MCF 10A (cell line): ENCODE measurements at regions of chr10 and their contacts with region 1.

Region 1: DNA sequence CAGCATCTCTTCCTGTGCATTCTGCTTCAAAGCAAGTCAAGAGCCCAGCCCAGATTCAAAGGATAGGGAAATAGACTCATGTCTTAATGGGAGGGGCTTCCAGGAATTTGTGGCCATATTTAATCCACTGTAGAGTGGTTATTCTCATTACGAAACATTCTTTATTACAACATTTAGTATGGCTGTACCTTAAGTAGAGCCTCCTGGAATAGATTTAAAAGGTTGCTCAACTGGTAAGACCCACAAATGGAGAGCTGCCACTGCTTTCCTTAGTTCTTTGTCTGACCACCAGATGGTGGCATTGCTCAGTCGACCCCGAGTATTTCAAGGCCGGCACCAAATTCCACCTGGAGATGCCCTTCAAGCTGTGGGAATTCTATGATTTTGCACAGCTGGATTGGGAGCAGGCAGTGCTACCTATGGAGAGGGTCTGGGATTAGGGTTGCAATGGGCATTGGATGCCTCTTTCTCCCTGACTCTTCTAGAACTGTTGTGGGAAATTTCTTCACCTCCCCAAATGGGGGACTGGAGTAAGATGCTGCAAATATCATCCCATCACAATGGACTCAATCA is 102.2 kb downstream of the RBM20 start:
- DNase-seq: peak; percentile 87
- H3K4me3 Mint-ChIP-seq: no peak overlapping the region
- H3K27ac Mint-ChIP-seq: peak overlapping the region; percentile 51
- H3K4me1 Mint-ChIP-seq: peaks cover 14% of the 10 kb centered on the region
- H3K27me3 Mint-ChIP-seq: no peaks in the 10 kb centered on the region
- CTCF ChIP-seq: peak; percentile 86

Region 2: DNA sequence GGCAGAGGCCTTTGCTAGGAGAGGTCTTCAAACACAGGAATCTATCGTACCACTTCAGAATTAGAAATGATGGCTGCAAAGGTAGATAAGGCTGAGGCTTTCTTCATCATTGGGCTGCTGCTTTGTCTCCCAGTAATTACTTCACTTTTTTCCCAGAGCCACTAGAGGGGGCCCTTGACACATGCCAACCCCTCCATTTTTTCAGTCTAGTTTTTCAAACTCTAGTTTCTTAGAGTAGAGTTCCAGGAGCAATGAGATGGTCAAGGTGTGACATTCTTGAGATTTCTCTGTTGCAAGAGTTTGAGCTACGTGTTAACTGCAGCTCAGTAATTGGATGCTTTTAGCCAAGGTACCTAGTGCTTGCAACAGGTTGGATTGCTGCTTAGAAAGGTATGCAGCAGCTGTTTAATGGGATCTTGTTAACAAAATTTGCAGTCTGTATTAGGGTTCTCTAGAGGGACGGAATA is 136.0 kb before region 1 on chr10:
- CTCF ChIA-PET with region 1: interaction called, 8 read pairs
- POLR2A ChIA-PET with region 1: interaction called, 5 read pairs
- intact Hi-C with region 1: loop called (anchors 1 kb)
- DNase-seq: peak; percentile 78
- H3K4me3 Mint-ChIP-seq: no peak overlapping the region
- H3K27ac Mint-ChIP-seq: no peak overlapping the region
- H3K4me1 Mint-ChIP-seq: no peaks in the 10 kb centered on the region
- H3K27me3 Mint-ChIP-seq: no peaks in the 10 kb centered on the region
- CTCF ChIP-seq: peak; percentile 62

Region 3: DNA sequence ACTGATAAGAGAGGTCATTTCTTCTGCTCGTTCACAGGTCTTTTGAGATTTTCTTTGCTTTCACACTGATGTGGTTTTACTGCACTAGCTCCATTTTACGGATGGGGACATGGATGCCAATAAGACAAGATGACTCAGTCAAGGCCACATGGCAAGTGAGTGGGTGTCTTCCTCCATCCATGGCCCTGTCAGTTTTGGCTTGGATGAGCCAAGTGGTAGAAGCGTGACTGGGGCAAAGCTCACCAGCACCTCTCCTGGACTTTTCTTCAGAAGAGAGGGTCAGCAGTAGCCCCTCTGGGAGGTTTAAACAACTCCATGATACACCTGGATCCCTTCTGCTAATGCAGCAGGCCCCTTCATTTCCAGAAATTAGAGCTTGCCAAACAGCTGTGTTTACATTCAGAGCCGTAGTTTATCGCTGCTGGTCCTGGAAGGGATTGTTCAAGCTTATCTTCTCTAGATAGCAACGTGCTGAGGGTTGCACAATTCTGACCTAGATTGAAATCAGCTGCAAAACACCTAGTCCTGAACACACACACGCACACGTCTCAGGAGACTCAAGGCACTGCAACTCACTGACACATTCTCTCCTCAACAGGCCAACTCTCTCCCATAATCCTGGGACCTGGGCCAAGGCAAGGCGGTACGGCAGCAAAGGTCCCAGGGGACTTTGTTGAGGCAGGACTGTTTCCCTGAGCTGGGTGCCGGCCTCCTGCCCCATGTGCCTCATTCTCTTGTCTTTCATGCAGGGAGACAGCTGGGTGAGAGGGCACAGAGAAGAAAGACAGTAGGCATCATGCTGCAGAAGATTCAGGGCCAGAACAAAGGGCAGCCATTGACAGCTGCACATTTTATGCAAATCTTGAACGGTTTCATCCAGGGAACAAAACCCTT is 111.2 kb after region 1 on chr10:
- CTCF ChIA-PET with region 1: interaction called, 4 read pairs
- POLR2A ChIA-PET with region 1: interaction called, 18 read pairs
- intact Hi-C with region 1: no loop called
- DNase-seq: peak; percentile 52
- H3K4me3 Mint-ChIP-seq: no peak overlapping the region
- H3K27ac Mint-ChIP-seq: peak overlapping the region; percentile 39
- H3K4me1 Mint-ChIP-seq: peaks cover 48% of the 10 kb centered on the region
- H3K27me3 Mint-ChIP-seq: no peaks in the 10 kb centered on the region
- CTCF ChIP-seq: no peak

Region 4: GRCh38 chr10:110901954-110902819 is 155.8 kb after region 1 on chr10:
- CTCF ChIA-PET with region 1: interaction called, 7 read pairs
- POLR2A ChIA-PET with region 1: interaction called, 19 read pairs
- intact Hi-C with region 1: no loop called
- DNase-seq: peak; percentile 93
- H3K4me3 Mint-ChIP-seq: peak overlapping the region; percentile 2
- H3K27ac Mint-ChIP-seq: peak overlapping the region; percentile 4
- H3K4me1 Mint-ChIP-seq: peaks cover 20% of the 10 kb centered on the region
- H3K27me3 Mint-ChIP-seq: no peaks in the 10 kb centered on the region
- CTCF ChIP-seq: no peak

Region 5: GRCh38 chr10:111323389-111323966 is 577.1 kb after region 1 on chr10:
- CTCF ChIA-PET with region 1: no interaction called
- POLR2A ChIA-PET with region 1: no interaction called
- intact Hi-C with region 1: loop called (anchors 1 kb)
- DNase-seq: peak; percentile 13
- H3K4me3 Mint-ChIP-seq: no peak overlapping the region
- H3K27ac Mint-ChIP-seq: no peak overlapping the region
- H3K4me1 Mint-ChIP-seq: no peaks in the 10 kb centered on the region
- H3K27me3 Mint-ChIP-seq: peaks cover 39% of the 10 kb centered on the region
- CTCF ChIP-seq: peak; percentile 11